ENCODE measurements at regions of chr4 and their contacts with region 1.

Region 1: GRCh38 chr4:142405021-142405694 is 440.9 kb downstream of the INPP4B start:
- DNase-seq: peak; percentile 64 to 81 (median 68)
- H3K4me3 ChIP-seq: peak overlapping the region; percentile 69 to 70
- H3K4me3 Mint-ChIP-seq: peak overlapping the region; percentile 95 to 100 (median 98)
- H3K27ac ChIP-seq: peak overlapping the region; percentile 72
- H3K27ac Mint-ChIP-seq: peak overlapping the region; percentile 91 to 98 (median 95)
- H3K4me1 ChIP-seq: peaks cover 38% of the 10 kb centered on the region
- H3K4me1 Mint-ChIP-seq: peaks cover 26 to 72% (median 36%) of the 10 kb centered on the region in 4 donors
- H3K27me3 ChIP-seq: no peaks in the 10 kb centered on the region
- H3K27me3 Mint-ChIP-seq: no peaks in the 10 kb centered on the region

Region 2: DNA sequence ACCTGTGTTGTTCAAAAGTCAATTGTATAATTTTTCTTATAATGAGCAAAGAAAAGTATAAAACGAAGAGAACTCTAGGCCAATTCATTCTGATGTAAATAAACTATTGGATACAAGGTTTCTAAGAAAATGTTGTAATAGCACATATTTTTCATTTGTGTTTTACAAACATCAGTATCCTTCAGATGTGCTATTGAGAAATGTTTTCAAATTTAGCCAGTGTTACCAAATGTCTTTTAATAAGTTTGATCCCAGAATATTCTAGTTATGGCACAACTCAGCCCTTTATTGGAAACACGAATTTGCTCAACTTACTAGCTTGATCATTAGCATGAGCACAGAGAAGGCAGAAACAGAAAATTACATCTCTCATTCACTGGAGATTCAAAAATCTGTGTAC is 449.5 kb before region 1 on chr4:
- CTCF ChIA-PET with region 1: no interaction called
- POLR2A ChIA-PET with region 1: no interaction called
- intact Hi-C with region 1: no loop called
- DNase-seq: no peak
- H3K4me3 ChIP-seq: no peak overlapping the region
- H3K4me3 Mint-ChIP-seq: no peak overlapping the region
- H3K27ac ChIP-seq: no peak overlapping the region
- H3K27ac Mint-ChIP-seq: no peak overlapping the region
- H3K4me1 ChIP-seq: no peaks in the 10 kb centered on the region
- H3K4me1 Mint-ChIP-seq: no peaks in the 10 kb centered on the region
- H3K27me3 ChIP-seq: no peaks in the 10 kb centered on the region
- H3K27me3 Mint-ChIP-seq: peaks cover 0 to 5% of the 10 kb centered on the region in 2 donors

Region 3: GRCh38 chr4:142358656-142359055 is 46.5 kb before region 1 on chr4:
- CTCF ChIA-PET with region 1: interaction called, 96 read pairs
- POLR2A ChIA-PET with region 1: interaction called, 88 read pairs
- intact Hi-C with region 1: loop called (anchors 1 kb)
- DNase-seq: no peak
- H3K4me3 ChIP-seq: no peak overlapping the region
- H3K4me3 Mint-ChIP-seq: peak overlapping the region; percentile 6 to 72 (median 37)
- H3K27ac ChIP-seq: no peak overlapping the region
- H3K27ac Mint-ChIP-seq: peak overlapping the region; percentile 65 to 96 (median 76)
- H3K4me1 ChIP-seq: peaks cover 89% of the 10 kb centered on the region
- H3K4me1 Mint-ChIP-seq: peaks cover 76 to 90% (median 84%) of the 10 kb centered on the region in 4 donors
- H3K27me3 ChIP-seq: no peaks in the 10 kb centered on the region
- H3K27me3 Mint-ChIP-seq: no peaks in the 10 kb centered on the region

Region 4: GRCh38 chr4:142379277-142380057 is 25.7 kb before region 1 on chr4:
- CTCF ChIA-PET with region 1: interaction called, 9 read pairs
- POLR2A ChIA-PET with region 1: interaction called, 122 read pairs
- intact Hi-C with region 1: no loop called
- DNase-seq: no peak
- H3K4me3 ChIP-seq: no peak overlapping the region
- H3K4me3 Mint-ChIP-seq: peak overlapping the region in 5 of 8 donors; percentile 17 to 72 (median 60)
- H3K27ac ChIP-seq: no peak overlapping the region
- H3K27ac Mint-ChIP-seq: peak overlapping the region; percentile 31 to 92 (median 76)
- H3K4me1 ChIP-seq: peaks cover 84% of the 10 kb centered on the region
- H3K4me1 Mint-ChIP-seq: peaks cover 64 to 85% (median 74%) of the 10 kb centered on the region in 4 donors
- H3K27me3 ChIP-seq: no peaks in the 10 kb centered on the region
- H3K27me3 Mint-ChIP-seq: no peaks in the 10 kb centered on the region

Region 5: DNA sequence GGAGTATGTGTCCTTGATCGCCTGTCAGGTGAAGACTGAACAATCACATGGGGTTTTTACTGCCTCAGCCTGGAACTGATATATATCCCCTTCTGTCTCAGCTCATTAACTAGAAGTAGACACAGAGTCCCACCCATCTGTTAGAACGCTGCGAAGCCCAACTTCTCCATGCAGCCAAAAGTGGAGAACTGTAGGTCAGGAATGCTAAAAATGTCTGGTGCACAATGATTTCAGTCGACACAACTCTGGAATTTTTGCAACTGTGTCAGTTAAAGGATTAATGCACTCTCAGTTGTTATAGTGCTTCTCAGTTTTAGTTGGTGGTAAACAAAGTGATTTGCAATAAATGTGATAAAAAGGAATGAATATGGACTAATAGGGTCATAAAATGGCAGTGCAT is 153.7 kb after region 1 on chr4:
- CTCF ChIA-PET with region 1: interaction called, 4 read pairs
- POLR2A ChIA-PET with region 1: interaction called, 16 read pairs
- intact Hi-C with region 1: no loop called
- DNase-seq: no peak
- H3K4me3 ChIP-seq: peak overlapping the region in 1 of 2 donors; percentile 19
- H3K4me3 Mint-ChIP-seq: peak overlapping the region; percentile 18 to 82 (median 52)
- H3K27ac ChIP-seq: peak overlapping the region; percentile 28
- H3K27ac Mint-ChIP-seq: peak overlapping the region in 5 of 7 donors; percentile 52 to 87 (median 78)
- H3K4me1 ChIP-seq: peaks cover 85% of the 10 kb centered on the region
- H3K4me1 Mint-ChIP-seq: peaks cover 63 to 86% (median 71%) of the 10 kb centered on the region in 4 donors
- H3K27me3 ChIP-seq: no peaks in the 10 kb centered on the region
- H3K27me3 Mint-ChIP-seq: no peaks in the 10 kb centered on the region

Region 6: DNA sequence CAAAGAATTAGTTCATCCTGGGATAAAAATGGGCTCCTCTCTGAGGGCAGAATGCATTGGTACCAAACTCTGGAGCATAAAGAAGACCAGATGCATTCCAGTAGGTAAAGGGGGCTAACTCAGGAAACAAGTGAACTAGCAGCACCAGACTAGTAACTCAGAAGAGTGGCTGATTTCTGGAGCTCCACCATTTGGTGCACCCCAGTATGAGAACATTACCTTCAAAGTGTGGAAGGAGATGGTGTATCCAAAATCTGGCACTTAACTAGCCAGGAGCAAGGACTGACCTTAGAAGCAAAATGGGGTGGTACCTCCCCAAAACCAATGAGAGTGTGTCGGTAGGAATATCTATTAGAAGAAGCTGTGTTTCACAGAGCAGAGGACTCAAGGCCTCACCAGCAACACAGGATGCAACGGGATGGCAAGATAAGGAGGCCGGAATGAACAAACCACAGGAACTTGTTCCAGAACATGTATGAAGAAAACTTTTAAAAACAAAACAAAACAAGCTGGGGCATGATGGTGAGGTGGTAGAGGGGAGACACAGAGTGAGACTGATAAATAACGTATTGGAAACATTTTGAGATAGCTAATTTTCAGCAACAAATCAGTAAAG is 298.6 kb after region 1 on chr4:
- CTCF ChIA-PET with region 1: interaction called, 5 read pairs
- POLR2A ChIA-PET with region 1: interaction called, 33 read pairs
- intact Hi-C with region 1: loop called (anchors 5 kb)
- DNase-seq: peak; percentile 62 to 77 (median 71)
- H3K4me3 ChIP-seq: peak overlapping the region; percentile 3 to 11
- H3K4me3 Mint-ChIP-seq: no peak overlapping the region
- H3K27ac ChIP-seq: peak overlapping the region; percentile 38
- H3K27ac Mint-ChIP-seq: no peak overlapping the region
- H3K4me1 ChIP-seq: peaks cover 95% of the 10 kb centered on the region
- H3K4me1 Mint-ChIP-seq: peaks cover 30 to 33% (median 31%) of the 10 kb centered on the region in 4 donors
- H3K27me3 ChIP-seq: no peaks in the 10 kb centered on the region
- H3K27me3 Mint-ChIP-seq: no peaks in the 10 kb centered on the region

Measured in CD4-positive, alpha-beta memory T cell (primary cell).